HEK293 (cell line): ENCODE measurements at regions of chr19 and their contacts with region 1.

Region 1: GRCh38 chr19:33521480-33522370 is at the start of gene PEPD:
- H3K4me3 ChIP-seq: peak within 1 kb of the TSS; percentile 74
- H3K27ac ChIP-seq: peak within 1 kb of the TSS; percentile 16; the same call in 1 of the 2 replicates
- H3K4me1 ChIP-seq: peaks cover 12% of the 10 kb centered on the region
- CTCF ChIP-seq: peak; percentile 45; the same call in 1 of the 2 replicates

Region 2: GRCh38 chr19:33509796-33510213 is 11.9 kb before region 1 on chr19:
- CTCF ChIA-PET with region 1: no interaction called
- POLR2A ChIA-PET with region 1: interaction called, 23 read pairs
- H3K4me3 ChIP-seq: no peak overlapping the region
- H3K27ac ChIP-seq: no peak overlapping the region
- H3K4me1 ChIP-seq: no peaks in the 10 kb centered on the region
- CTCF ChIP-seq: no peak

Region 3: GRCh38 chr19:33535226-33535625 is 13.5 kb after region 1 on chr19:
- CTCF ChIA-PET with region 1: interaction called, 4 read pairs
- POLR2A ChIA-PET with region 1: interaction called, 12 read pairs
- H3K4me3 ChIP-seq: no peak overlapping the region
- H3K27ac ChIP-seq: no peak overlapping the region
- H3K4me1 ChIP-seq: no peaks in the 10 kb centered on the region
- CTCF ChIP-seq: no peak

Region 4: DNA sequence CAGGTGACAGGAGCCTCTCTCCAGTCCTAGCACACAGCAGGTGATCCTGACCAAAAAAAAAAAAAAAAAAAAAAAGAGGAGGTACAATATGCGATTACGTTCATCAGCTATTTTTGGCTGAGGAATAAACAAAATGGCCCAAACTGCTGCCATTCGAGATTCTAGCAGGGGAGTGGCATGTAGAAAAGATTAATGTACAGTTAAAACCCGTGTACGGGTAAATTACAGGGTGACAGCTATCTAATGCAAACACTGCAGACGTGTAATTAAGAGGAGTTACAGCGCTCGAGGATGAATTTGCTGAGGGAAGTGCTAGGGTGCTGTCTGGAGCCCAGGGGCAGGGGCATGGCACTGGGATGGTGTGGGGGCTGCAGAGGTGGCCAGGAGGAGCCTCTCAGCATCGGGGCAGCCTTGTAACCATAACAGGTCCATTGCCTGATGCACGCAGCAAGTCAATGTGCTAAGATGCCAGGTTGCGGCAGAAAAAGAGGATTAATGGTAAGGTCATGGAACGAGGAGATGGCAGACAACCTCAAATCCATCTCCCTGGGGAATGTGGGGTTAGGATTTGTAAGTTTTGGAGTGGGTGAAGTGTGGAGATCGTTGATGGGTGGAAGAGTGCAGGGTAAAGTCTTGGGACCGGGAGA is 117.4 kb after region 1 on chr19:
- CTCF ChIA-PET with region 1: no interaction called
- POLR2A ChIA-PET with region 1: no interaction called
- H3K4me3 ChIP-seq: no peak overlapping the region
- H3K27ac ChIP-seq: peak overlapping the region; percentile 61; the same call in 1 of the 2 replicates
- H3K4me1 ChIP-seq: peaks cover 18% of the 10 kb centered on the region
- CTCF ChIP-seq: no peak